ENCODE measurements at regions of chr2 and their contacts with region 1.

Region 1: GRCh38 chr2:174341286-174341994 is 6.7 kb downstream of the SP9 start:
- DNase-seq: peak; percentile 94
- ATAC-seq: peak; percentile 72
- H3K4me3 Mint-ChIP-seq: peak overlapping the region; percentile 52
- H3K27ac Mint-ChIP-seq: peak overlapping the region; percentile 42
- H3K4me1 Mint-ChIP-seq: peaks cover 39% of the 10 kb centered on the region
- H3K27me3 Mint-ChIP-seq: peaks cover 59% of the 10 kb centered on the region

Region 2: DNA sequence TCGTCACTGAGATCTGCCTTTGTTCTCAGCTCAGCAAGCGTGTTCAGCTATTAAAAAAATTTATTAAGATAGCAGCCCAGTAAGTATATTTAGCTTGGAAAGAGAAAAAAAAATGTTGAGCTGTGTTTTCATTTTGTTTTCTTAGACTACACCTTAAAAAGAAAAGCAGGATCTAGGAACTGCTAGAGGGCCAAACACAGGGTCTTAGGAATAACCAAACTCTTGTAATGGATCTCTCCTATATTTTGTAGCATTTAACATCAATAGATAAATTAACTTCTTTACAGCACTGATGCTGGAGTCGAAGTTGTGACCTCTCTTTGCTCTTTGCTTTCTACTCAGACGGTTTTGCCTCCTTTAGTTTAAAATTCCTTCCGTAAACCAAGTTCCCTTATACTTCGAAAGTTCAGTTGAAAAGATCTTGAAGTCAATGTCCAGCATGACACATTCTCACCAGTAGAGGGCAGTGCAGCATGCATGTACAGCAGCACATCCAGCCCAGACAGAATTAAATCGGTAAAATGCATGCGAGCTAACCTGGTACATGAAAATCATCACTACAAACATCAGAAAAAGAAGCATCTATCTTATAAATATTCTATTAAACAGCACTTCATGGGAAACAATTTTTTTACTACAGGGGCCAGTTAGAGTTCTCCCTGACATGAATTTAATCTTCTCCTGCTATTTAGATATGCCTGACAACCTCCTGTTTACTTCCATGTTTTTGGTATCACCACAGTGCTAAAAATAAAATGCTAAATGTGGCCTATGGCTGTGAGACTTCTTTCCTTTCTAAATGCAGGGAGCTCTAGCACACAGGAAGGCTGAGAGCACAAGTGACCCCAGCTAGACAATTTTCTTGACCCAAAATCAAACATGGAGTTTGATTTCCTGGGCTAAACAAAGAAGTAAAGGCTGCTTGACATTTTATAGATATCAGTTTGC is 1314.0 kb before region 1 on chr2:
- CTCF ChIA-PET with region 1: interaction called, 6 read pairs
- POLR2A ChIA-PET with region 1: no interaction called
- intact Hi-C with region 1: loop called in 1 of 2 experiments (anchors 1 kb)
- DNase-seq: peak; percentile 87
- ATAC-seq: peak; percentile 63
- H3K4me3 Mint-ChIP-seq: no peak overlapping the region
- H3K27ac Mint-ChIP-seq: no peak overlapping the region
- H3K4me1 Mint-ChIP-seq: peaks cover 4% of the 10 kb centered on the region
- H3K27me3 Mint-ChIP-seq: peaks cover 6% of the 10 kb centered on the region

Region 3: GRCh38 chr2:173448938-173449471 is 892.4 kb before region 1 on chr2:
- CTCF ChIA-PET with region 1: no interaction called
- POLR2A ChIA-PET with region 1: no interaction called
- intact Hi-C with region 1: loop called in 1 of 2 experiments (anchors 5 kb)
- DNase-seq: peak; percentile 81
- ATAC-seq: peak; percentile 74
- H3K4me3 Mint-ChIP-seq: peak overlapping the region; percentile 35
- H3K27ac Mint-ChIP-seq: peak overlapping the region; percentile 38
- H3K4me1 Mint-ChIP-seq: peaks cover 12% of the 10 kb centered on the region
- H3K27me3 Mint-ChIP-seq: peaks cover 2% of the 10 kb centered on the region

Region 4: DNA sequence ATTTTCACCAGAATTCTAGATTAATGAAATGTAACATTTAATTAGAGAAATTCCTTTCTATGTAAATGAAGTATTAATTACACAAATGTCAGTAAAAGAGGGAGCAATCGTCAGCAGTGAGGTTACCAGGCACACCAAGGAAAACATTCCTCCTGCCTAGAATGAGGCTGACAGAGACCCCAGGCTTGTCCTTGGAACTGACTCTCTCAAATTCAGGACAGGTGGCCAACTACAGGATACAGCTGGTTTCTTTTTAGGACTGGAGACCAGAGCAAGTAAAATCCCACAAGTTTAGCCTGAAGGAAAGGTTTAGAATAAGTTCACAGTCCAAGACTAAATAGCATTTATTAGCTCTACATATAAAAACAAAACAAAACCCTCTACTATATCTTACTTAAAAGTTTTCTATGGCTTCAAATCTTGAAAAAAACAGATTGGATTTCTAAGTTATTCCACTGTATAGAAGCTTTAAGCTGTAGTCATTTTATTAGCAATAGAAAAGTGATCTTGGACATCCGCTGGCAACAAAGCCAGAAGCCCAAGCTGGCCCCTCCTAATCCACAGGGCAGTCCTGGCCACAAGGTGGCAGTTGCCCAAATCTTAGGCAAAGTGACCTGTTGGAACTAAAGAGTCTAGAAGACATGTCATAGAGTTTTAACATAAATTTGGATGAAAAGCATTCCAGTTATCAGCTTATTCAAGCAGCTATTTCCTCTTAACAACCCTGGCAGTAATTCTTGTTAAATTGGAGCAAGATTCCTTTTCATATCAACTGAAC is 457.2 kb before region 1 on chr2:
- CTCF ChIA-PET with region 1: no interaction called
- POLR2A ChIA-PET with region 1: no interaction called
- intact Hi-C with region 1: loop called (anchors 5 to 10 kb)
- DNase-seq: peak; percentile 53
- ATAC-seq: no peak
- H3K4me3 Mint-ChIP-seq: no peak overlapping the region
- H3K27ac Mint-ChIP-seq: no peak overlapping the region
- H3K4me1 Mint-ChIP-seq: no peaks in the 10 kb centered on the region
- H3K27me3 Mint-ChIP-seq: peaks cover 12% of the 10 kb centered on the region

Region 5: DNA sequence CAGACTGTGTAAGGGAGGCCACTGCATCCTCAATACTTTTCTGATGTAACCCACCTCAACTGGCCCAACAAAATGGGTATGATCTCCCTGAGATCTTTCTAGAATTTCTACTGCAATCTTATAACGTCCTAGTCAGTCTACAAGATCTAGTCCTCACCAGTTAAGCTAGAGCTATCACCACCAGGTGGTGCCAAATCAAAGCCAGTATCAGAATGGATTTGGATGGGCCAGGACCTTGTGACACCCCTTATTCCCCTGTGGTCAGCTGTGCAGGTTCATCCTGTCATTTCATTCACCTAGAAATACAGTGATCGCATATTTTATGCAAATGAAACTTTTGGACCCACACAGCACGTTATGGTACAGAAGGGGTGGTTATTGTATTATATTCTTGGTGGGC is 183.4 kb before region 1 on chr2:
- CTCF ChIA-PET with region 1: interaction called, 3 read pairs
- POLR2A ChIA-PET with region 1: no interaction called
- intact Hi-C with region 1: loop called (anchors 1 to 5 kb)
- DNase-seq: peak; percentile 43
- ATAC-seq: peak; percentile 63
- H3K4me3 Mint-ChIP-seq: no peak overlapping the region
- H3K27ac Mint-ChIP-seq: no peak overlapping the region
- H3K4me1 Mint-ChIP-seq: peaks cover 10% of the 10 kb centered on the region
- H3K27me3 Mint-ChIP-seq: no peaks in the 10 kb centered on the region

Region 6: GRCh38 chr2:174634130-174635014 is 292.9 kb after region 1 on chr2:
- CTCF ChIA-PET with region 1: no interaction called
- POLR2A ChIA-PET with region 1: no interaction called
- intact Hi-C with region 1: no loop called
- DNase-seq: peak; percentile 69
- ATAC-seq: peak; percentile 70
- H3K4me3 Mint-ChIP-seq: peak overlapping the region; percentile 92
- H3K27ac Mint-ChIP-seq: peak overlapping the region; percentile 98
- H3K4me1 Mint-ChIP-seq: peaks cover 56% of the 10 kb centered on the region
- H3K27me3 Mint-ChIP-seq: no peaks in the 10 kb centered on the region

Region 7: DNA sequence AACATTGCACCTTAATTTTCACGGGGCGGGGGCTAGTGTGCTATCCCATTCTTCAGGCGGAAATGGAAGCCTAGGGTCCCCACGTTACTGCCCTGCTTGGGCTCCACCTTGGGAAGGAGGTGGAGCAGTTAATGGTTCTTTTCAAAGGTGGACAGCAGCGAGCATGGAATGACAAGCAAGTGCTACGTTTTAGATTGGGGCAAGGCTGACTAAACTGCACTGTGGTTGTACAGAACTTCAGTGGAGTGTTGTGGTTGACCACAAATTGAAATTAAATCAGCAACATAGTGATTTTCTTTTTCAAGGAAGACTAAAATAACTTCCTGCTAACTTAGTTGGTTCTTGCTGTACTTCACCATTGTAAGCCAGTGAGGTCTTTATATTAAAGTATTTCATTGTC is 375.8 kb after region 1 on chr2:
- CTCF ChIA-PET with region 1: no interaction called
- POLR2A ChIA-PET with region 1: no interaction called
- intact Hi-C with region 1: no loop called
- DNase-seq: peak; percentile 24
- ATAC-seq: peak; percentile 83
- H3K4me3 Mint-ChIP-seq: no peak overlapping the region
- H3K27ac Mint-ChIP-seq: no peak overlapping the region
- H3K4me1 Mint-ChIP-seq: peaks cover 28% of the 10 kb centered on the region
- H3K27me3 Mint-ChIP-seq: no peaks in the 10 kb centered on the region

Region 8: DNA sequence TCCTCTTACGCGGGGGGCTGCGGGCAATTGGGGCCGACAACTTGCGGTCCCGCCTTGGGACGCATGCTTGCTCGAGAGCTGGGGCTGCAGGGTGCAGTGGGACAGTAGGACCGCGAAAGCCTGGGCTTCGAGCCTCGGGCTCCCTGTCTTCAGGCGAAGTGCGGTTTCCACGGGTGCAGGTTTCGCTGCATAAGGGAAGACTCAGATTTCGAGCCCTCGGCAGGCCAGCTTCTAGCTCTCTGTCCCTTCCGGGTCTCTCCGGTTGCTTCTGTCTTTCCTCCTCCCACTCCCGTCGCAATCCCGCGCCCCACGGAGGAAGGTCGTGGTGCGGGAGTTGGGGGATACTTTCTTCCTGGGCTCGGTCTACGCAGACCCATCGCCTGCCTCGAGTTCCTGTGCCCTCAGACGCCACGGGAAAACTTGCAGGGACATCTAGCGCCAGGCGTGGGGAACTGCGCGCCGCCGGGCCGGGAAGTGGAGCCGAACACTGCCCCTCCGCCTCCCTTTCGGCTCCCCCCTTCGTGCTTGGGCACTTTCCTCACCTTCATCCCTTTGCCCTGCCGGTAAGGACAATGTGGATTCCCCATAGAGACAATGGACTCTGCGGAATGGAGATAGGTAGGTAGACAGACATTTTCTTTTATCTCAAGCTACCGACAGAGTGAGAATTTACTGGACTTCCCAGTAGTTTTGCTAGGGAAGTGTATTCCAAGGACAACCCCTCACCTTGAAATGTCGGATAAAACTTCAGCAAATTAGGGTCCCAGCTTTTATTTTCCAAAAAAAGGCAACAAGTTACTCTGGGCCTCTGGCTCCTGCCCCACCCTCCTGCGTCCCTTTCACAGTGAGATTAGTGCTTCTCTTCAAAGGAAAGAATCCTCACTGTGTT is 1746.9 kb after region 1 on chr2:
- CTCF ChIA-PET with region 1: no interaction called
- POLR2A ChIA-PET with region 1: no interaction called
- intact Hi-C with region 1: loop called in 1 of 2 experiments (anchors 10 kb)
- DNase-seq: peak; percentile 61
- ATAC-seq: no peak
- H3K4me3 Mint-ChIP-seq: peak overlapping the region; percentile 51
- H3K27ac Mint-ChIP-seq: no peak overlapping the region
- H3K4me1 Mint-ChIP-seq: peaks cover 14% of the 10 kb centered on the region
- H3K27me3 Mint-ChIP-seq: peaks cover 82% of the 10 kb centered on the region

Measured in activated CD4-positive, alpha-beta T cell treated with anti-CD3 and anti-CD28 coated beads for 36 hours (primary cell).